Activated T-helper 2 cell treated with anti-CD3 and anti-CD28 coated beads, Interferon-gamma antibody, Interleukin-2, Interleukin-4, amounts not matched to agents 10 μg/mL and 5 μg/mL and 100 μg/mL, durations not matched to agents 14 hours and 24 hours and 36 hours (primary cell): ENCODE measurements at regions of chr14 and their contacts with region 1.

Region 1: GRCh38 chr14:64891839-64892375 is 12.2 kb upstream of the SPTB start:
- DNase-seq: no peak
- H3K4me3 Mint-ChIP-seq: no peak overlapping the region
- H3K27ac Mint-ChIP-seq: no peak overlapping the region
- H3K4me1 Mint-ChIP-seq: no peaks in the 10 kb centered on the region
- H3K27me3 Mint-ChIP-seq: peaks cover 27% of the 10 kb centered on the region

Region 2: GRCh38 chr14:64671591-64671990 is 220.3 kb before region 1 on chr14:
- intact Hi-C with region 1: loop called (anchors 5 kb)
- DNase-seq: no peak
- H3K4me3 Mint-ChIP-seq: no peak overlapping the region
- H3K27ac Mint-ChIP-seq: no peak overlapping the region
- H3K4me1 Mint-ChIP-seq: peaks cover 29% of the 10 kb centered on the region
- H3K27me3 Mint-ChIP-seq: peaks cover 4% of the 10 kb centered on the region

Region 3: GRCh38 chr14:64764641-64765520 is 127.0 kb before region 1 on chr14:
- intact Hi-C with region 1: loop called (anchors 5 kb)
- DNase-seq: peak; percentile 53
- H3K4me3 Mint-ChIP-seq: peak overlapping the region; percentile 10
- H3K27ac Mint-ChIP-seq: no peak overlapping the region
- H3K4me1 Mint-ChIP-seq: peaks cover 14% of the 10 kb centered on the region
- H3K27me3 Mint-ChIP-seq: peaks cover 16% of the 10 kb centered on the region

Region 4: GRCh38 chr14:64823305-64823861 is 68.5 kb before region 1 on chr14:
- intact Hi-C with region 1: loop called (anchors 5 kb)
- DNase-seq: peak; percentile 47
- H3K4me3 Mint-ChIP-seq: peak overlapping the region; percentile 19
- H3K27ac Mint-ChIP-seq: no peak overlapping the region
- H3K4me1 Mint-ChIP-seq: peaks cover 5% of the 10 kb centered on the region
- H3K27me3 Mint-ChIP-seq: peaks cover 38% of the 10 kb centered on the region